Activated CD4-positive, alpha-beta T cell treated with anti-CD3 and anti-CD28 coated beads, Interleukin-2, amount 10 ng/mL, durations not matched to agents 24 days and 14 days (primary cell): ENCODE measurements at regions of chr12 and their contacts with region 1.

Region 1: DNA sequence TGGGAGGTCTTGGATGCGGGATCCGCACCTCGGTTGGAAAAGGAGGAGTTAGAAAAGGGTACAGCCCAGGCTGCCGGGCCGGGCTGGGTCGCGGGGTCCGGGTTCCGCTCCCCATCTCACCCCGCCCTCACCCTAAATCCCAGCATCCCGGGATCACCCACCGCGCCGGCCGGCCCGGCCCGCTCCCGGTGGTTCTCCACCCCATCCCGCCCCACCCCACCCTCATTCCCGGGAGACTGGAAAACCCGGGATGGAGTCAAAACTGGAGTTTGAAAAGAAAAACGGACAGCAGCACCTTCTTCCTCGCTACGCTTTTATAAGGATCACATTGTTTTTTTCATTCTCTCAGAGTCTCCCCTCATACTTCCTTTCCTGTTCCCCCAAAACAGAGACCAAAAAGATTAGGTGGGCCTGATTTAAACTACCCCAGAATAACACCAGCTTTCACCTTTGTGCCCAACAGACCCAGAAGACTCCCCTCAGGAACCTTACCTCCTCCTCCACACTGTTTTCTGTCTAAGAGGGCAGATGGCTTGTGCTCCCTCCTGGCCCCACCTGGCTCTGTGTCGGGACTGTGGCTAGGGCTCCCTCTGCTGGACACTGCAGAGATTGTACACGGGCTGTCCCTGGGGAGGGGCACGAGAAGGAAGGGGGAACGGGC is 2.8 kb downstream of the GLI1 start:
- DNase-seq: peak; percentile 97
- H3K4me3 Mint-ChIP-seq: peak overlapping the region; percentile 89
- H3K27ac Mint-ChIP-seq: peak overlapping the region; percentile 79
- H3K4me1 Mint-ChIP-seq: peaks cover 49% of the 10 kb centered on the region
- H3K27me3 Mint-ChIP-seq: peaks cover 20% of the 10 kb centered on the region

Region 2: GRCh38 chr12:57280211-57281062 is 181.9 kb before region 1 on chr12:
- intact Hi-C with region 1: loop called (anchors 2 kb)
- DNase-seq: peak; percentile 90
- H3K4me3 Mint-ChIP-seq: peak overlapping the region; percentile 68
- H3K27ac Mint-ChIP-seq: peak overlapping the region; percentile 91
- H3K4me1 Mint-ChIP-seq: peaks cover 20% of the 10 kb centered on the region
- H3K27me3 Mint-ChIP-seq: no peaks in the 10 kb centered on the region

Region 3: GRCh38 chr12:57416039-57416996 is 46.1 kb before region 1 on chr12:
- intact Hi-C with region 1: no loop called
- DNase-seq: no peak
- H3K4me3 Mint-ChIP-seq: no peak overlapping the region
- H3K27ac Mint-ChIP-seq: no peak overlapping the region
- H3K4me1 Mint-ChIP-seq: peaks cover 5% of the 10 kb centered on the region
- H3K27me3 Mint-ChIP-seq: no peaks in the 10 kb centered on the region

Region 4: DNA sequence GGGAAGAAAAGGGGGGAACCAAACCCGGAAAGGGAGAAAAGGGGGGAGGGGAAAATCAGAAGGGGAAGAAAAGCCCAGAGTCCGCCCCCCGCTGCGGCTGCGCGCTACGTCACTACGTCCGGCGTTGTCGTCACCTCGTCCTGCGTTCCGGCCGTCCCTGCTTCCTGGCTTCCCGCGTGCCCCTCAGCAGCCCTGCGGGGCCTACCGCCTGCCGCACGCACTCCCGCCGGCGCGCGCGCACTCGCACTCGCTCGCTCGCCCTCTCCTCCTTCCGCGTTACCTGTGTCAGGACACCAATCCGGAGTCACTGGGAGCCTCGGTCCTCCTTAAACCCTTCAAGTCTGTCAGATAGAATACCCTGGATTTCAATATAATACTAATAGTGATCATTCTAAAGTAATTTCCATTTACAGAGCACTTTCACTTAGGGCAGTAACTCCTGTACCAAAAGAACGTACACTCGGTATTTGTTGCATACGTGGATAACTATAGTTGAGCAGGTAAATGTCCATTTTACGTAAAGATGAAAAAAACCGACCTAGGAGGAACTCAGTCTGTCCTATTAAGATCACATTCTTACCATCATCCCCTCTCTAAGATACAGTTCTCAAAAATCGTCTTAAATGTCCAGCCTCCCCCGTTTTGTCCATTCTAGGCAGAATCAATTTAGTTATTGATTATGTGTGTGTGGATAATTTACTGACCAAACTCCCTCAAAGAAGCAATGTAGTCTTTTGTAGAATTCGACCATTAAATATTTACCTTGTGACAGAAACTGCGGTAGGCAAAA is 31.3 kb before region 1 on chr12 and contains the start of gene R3HDM2:
- intact Hi-C with region 1: loop called (anchors 1 kb)
- DNase-seq: peak; percentile 98
- H3K4me3 Mint-ChIP-seq: peak within 1 kb of the TSS; percentile 99
- H3K27ac Mint-ChIP-seq: peak within 1 kb of the TSS; percentile 99
- H3K4me1 Mint-ChIP-seq: peaks cover 33% of the 10 kb centered on the region
- H3K27me3 Mint-ChIP-seq: no peaks in the 10 kb centered on the region
- total RNA-seq, gene R3HDM2: 42.7 and 45.8 TPM in 2 replicates

Region 5: GRCh38 chr12:57476162-57476992 is 14.0 kb after region 1 on chr12:
- intact Hi-C with region 1: loop called (anchors 1 kb)
- DNase-seq: peak; percentile 93
- H3K4me3 Mint-ChIP-seq: peak overlapping the region; percentile 96
- H3K27ac Mint-ChIP-seq: peak overlapping the region; percentile 97
- H3K4me1 Mint-ChIP-seq: peaks cover 68% of the 10 kb centered on the region
- H3K27me3 Mint-ChIP-seq: no peaks in the 10 kb centered on the region

Region 6: GRCh38 chr12:57621497-57622292 is 159.3 kb after region 1 on chr12:
- intact Hi-C with region 1: loop called (anchors 5 kb)
- DNase-seq: peak; percentile 89
- H3K4me3 Mint-ChIP-seq: peak overlapping the region; percentile 88
- H3K27ac Mint-ChIP-seq: peak overlapping the region; percentile 43
- H3K4me1 Mint-ChIP-seq: peaks cover 22% of the 10 kb centered on the region
- H3K27me3 Mint-ChIP-seq: peaks cover 96% of the 10 kb centered on the region

Region 7: GRCh38 chr12:57744777-57745484 is 282.6 kb after region 1 on chr12 and contains the start of gene TSPAN31:
- intact Hi-C with region 1: loop called (anchors 5 kb)
- DNase-seq: peak; percentile 98
- H3K4me3 Mint-ChIP-seq: peak within 1 kb of the TSS; percentile 94
- H3K27ac Mint-ChIP-seq: peak within 1 kb of the TSS; percentile 90
- H3K4me1 Mint-ChIP-seq: peaks cover 45% of the 10 kb centered on the region
- H3K27me3 Mint-ChIP-seq: no peaks in the 10 kb centered on the region
- total RNA-seq, gene TSPAN31: 19.2 and 19.4 TPM in 2 replicates